ENCODE measurements at regions of chr21 and their contacts with region 1.

Region 1: GRCh38 chr21:17819114-17819876 is at the start of gene C21orf91:
- DNase-seq: peak; percentile 96
- ATAC-seq: peak; percentile 98
- total RNA-seq, gene C21orf91: 6.5 TPM

Region 2: GRCh38 chr21:17903029-17903806 is 83.9 kb after region 1 on chr21:
- intact Hi-C with region 1: loop called (anchors 2 kb)
- DNase-seq: no peak
- ATAC-seq: no peak